ENCODE measurements at regions of chr5 and their contacts with region 1.

Region 1: GRCh38 chr5:148730943-148731861 is 76.9 kb upstream of the HTR4 start:
- DNase-seq: peak; percentile 80
- ATAC-seq: peak; percentile 92
- H3K4me3 ChIP-seq: peak overlapping the region in 4 of 5 experiments; percentile 0 to 39 (median 24)
- H3K4me3 Mint-ChIP-seq: peak overlapping the region; percentile 76
- H3K27ac ChIP-seq: no peak overlapping the region
- H3K27ac Mint-ChIP-seq: no peak overlapping the region
- H3K4me1 ChIP-seq: no peaks in the 10 kb centered on the region
- H3K4me1 Mint-ChIP-seq: peaks cover 11% of the 10 kb centered on the region
- H3K27me3 ChIP-seq: no peaks in the 10 kb centered on the region
- H3K27me3 Mint-ChIP-seq: peaks cover 10% of the 10 kb centered on the region
- CTCF ChIP-seq: peak; percentile 98

Region 2: DNA sequence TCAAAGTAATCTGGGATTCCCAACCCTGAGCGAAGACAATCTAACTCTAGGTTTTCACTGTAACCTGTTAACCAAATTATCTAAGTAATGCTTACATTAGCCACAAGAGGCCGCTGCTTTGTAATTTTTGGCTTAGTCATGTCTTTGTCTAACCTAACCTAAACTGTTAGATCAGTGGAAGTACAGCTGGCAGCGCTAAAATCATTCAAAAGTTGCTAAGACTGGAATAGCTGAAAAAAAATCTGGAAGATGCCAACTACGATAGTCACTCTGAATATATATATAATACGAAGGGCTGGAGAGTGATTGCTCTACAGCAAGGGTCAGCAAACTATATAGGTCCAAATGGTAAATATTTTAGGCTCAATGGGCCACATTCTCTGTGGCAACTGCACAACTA is 287.2 kb before region 1 on chr5:
- CTCF ChIA-PET with region 1: interaction called, 8 read pairs
- POLR2A ChIA-PET with region 1: no interaction called
- intact Hi-C with region 1: loop called (anchors 2 kb)
- DNase-seq: peak; percentile 57
- ATAC-seq: peak; percentile 54
- H3K4me3 ChIP-seq: no peak overlapping the region
- H3K4me3 Mint-ChIP-seq: no peak overlapping the region
- H3K27ac ChIP-seq: no peak overlapping the region
- H3K27ac Mint-ChIP-seq: no peak overlapping the region
- H3K4me1 ChIP-seq: no peaks in the 10 kb centered on the region
- H3K4me1 Mint-ChIP-seq: no peaks in the 10 kb centered on the region
- H3K27me3 ChIP-seq: no peaks in the 10 kb centered on the region
- H3K27me3 Mint-ChIP-seq: no peaks in the 10 kb centered on the region
- CTCF ChIP-seq: peak; percentile 88

Region 3: GRCh38 chr5:148760945-148761638 is 29.9 kb after region 1 on chr5:
- CTCF ChIA-PET with region 1: interaction called, 12 read pairs
- POLR2A ChIA-PET with region 1: no interaction called
- intact Hi-C with region 1: no loop called
- DNase-seq: no peak
- ATAC-seq: no peak
- H3K4me3 ChIP-seq: no peak overlapping the region
- H3K4me3 Mint-ChIP-seq: no peak overlapping the region
- H3K27ac ChIP-seq: no peak overlapping the region
- H3K27ac Mint-ChIP-seq: no peak overlapping the region
- H3K4me1 ChIP-seq: no peaks in the 10 kb centered on the region
- H3K4me1 Mint-ChIP-seq: peaks cover 2% of the 10 kb centered on the region
- H3K27me3 ChIP-seq: no peaks in the 10 kb centered on the region
- H3K27me3 Mint-ChIP-seq: no peaks in the 10 kb centered on the region
- CTCF ChIP-seq: no peak

Region 4: GRCh38 chr5:148875205-148875875 is 144.1 kb after region 1 on chr5:
- CTCF ChIA-PET with region 1: no interaction called
- POLR2A ChIA-PET with region 1: no interaction called
- intact Hi-C with region 1: no loop called
- DNase-seq: no peak
- ATAC-seq: no peak
- H3K4me3 ChIP-seq: no peak overlapping the region
- H3K4me3 Mint-ChIP-seq: no peak overlapping the region
- H3K27ac ChIP-seq: no peak overlapping the region
- H3K27ac Mint-ChIP-seq: no peak overlapping the region
- H3K4me1 ChIP-seq: no peaks in the 10 kb centered on the region
- H3K4me1 Mint-ChIP-seq: no peaks in the 10 kb centered on the region
- H3K27me3 ChIP-seq: no peaks in the 10 kb centered on the region
- H3K27me3 Mint-ChIP-seq: no peaks in the 10 kb centered on the region
- CTCF ChIP-seq: no peak

Region 5: GRCh38 chr5:148957591-148958202 is 226.5 kb after region 1 on chr5:
- CTCF ChIA-PET with region 1: interaction called, 753 read pairs
- POLR2A ChIA-PET with region 1: no interaction called
- intact Hi-C with region 1: loop called (anchors 1 kb)
- DNase-seq: peak; percentile 68
- ATAC-seq: peak; percentile 69
- H3K4me3 ChIP-seq: no peak overlapping the region
- H3K4me3 Mint-ChIP-seq: no peak overlapping the region
- H3K27ac ChIP-seq: no peak overlapping the region
- H3K27ac Mint-ChIP-seq: no peak overlapping the region
- H3K4me1 ChIP-seq: peaks cover 4 to 5% of the 10 kb centered on the region in 2 donors
- H3K4me1 Mint-ChIP-seq: peaks cover 3% of the 10 kb centered on the region
- H3K27me3 ChIP-seq: no peaks in the 10 kb centered on the region
- H3K27me3 Mint-ChIP-seq: no peaks in the 10 kb centered on the region
- CTCF ChIP-seq: peak; percentile 97

Region 6: GRCh38 chr5:148998174-148998797 is 267.1 kb after region 1 on chr5:
- CTCF ChIA-PET with region 1: interaction called, 172 read pairs
- POLR2A ChIA-PET with region 1: no interaction called
- intact Hi-C with region 1: loop called (anchors 1 kb)
- DNase-seq: peak; percentile 63
- ATAC-seq: peak; percentile 41
- H3K4me3 ChIP-seq: no peak overlapping the region
- H3K4me3 Mint-ChIP-seq: no peak overlapping the region
- H3K27ac ChIP-seq: no peak overlapping the region
- H3K27ac Mint-ChIP-seq: no peak overlapping the region
- H3K4me1 ChIP-seq: no peaks in the 10 kb centered on the region
- H3K4me1 Mint-ChIP-seq: no peaks in the 10 kb centered on the region
- H3K27me3 ChIP-seq: no peaks in the 10 kb centered on the region
- H3K27me3 Mint-ChIP-seq: peaks cover 31% of the 10 kb centered on the region
- CTCF ChIP-seq: peak; percentile 79

Region 7: DNA sequence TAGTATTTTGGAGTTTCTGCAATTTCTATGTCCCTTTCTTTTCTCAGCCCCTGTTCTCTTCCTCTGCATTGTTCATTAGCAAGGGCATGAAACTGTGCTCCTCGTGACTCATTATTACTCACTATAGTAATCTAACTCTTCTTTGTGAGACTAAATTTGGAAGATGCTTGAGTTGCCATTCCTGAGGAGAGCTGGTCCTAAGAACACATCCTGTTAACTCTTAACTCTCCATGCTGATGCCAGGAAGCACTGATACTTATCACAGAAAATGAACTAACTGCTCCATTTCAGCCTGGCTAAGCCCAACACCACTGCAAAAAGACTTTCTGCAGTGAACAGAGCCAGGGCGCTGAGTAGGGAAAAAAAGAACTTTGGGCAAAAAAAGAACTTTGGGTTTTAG is 830.6 kb after region 1 on chr5:
- CTCF ChIA-PET with region 1: no interaction called
- POLR2A ChIA-PET with region 1: no interaction called
- intact Hi-C with region 1: loop called (anchors 5 kb)
- DNase-seq: no peak
- ATAC-seq: no peak
- H3K4me3 ChIP-seq: no peak overlapping the region
- H3K4me3 Mint-ChIP-seq: no peak overlapping the region
- H3K27ac ChIP-seq: no peak overlapping the region
- H3K27ac Mint-ChIP-seq: no peak overlapping the region
- H3K4me1 ChIP-seq: no peaks in the 10 kb centered on the region
- H3K4me1 Mint-ChIP-seq: no peaks in the 10 kb centered on the region
- H3K27me3 ChIP-seq: no peaks in the 10 kb centered on the region
- H3K27me3 Mint-ChIP-seq: no peaks in the 10 kb centered on the region
- CTCF ChIP-seq: no peak

Measured in B cell (primary cell).